Activated CD4-positive, alpha-beta memory T cell treated with anti-CD3 and anti-CD28 coated beads for 36 hours (primary cell): ENCODE measurements at regions of chr22 and their contacts with region 1.

Region 1: DNA sequence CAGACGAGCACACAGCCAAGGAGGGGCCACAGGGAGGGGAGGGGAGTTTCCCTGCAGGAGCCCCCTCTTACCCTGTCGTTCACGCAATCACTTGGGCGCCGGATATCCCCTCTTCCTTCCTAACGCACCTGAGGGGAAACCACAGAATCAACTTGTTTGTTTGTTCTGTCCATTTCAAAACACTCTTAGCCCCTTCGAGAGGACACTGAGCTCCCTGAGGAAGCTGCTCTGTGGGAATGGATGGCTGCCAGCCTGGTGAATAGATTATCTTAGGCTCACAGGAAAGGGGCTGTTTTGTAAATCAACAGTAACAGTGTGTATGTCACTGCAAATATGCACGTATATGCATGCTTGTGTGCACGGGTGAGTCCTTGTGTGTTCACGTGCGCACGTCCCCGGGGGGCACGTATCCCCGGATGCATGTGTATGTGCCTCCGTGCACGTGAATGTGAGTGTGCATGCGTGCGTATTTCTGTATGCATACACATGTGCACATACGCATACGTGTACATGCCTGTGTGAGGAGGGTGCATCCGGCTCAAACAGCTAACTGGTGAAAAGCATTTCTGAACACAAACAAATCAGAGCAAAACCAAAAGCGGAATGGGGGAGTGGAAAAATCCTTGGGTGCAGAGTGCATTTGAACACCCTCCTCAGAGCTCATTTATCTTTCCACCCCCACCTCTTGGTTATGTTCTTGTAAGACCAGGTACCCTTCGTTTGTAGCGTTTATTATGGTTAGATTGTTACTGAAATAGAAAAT is 7.2 kb downstream of the ARSA start:
- DNase-seq: peak; percentile 85
- H3K4me3 Mint-ChIP-seq: peak overlapping the region; percentile 75
- H3K27ac Mint-ChIP-seq: peak overlapping the region; percentile 97
- H3K4me1 Mint-ChIP-seq: peaks cover 37% of the 10 kb centered on the region
- H3K27me3 Mint-ChIP-seq: no peaks in the 10 kb centered on the region

Region 2: GRCh38 chr22:50244420-50245213 is 376.2 kb before region 1 on chr22 and contains the start of gene TUBGCP6:
- CTCF ChIA-PET with region 1: interaction called, 13 read pairs
- POLR2A ChIA-PET with region 1: interaction called, 4 read pairs
- intact Hi-C with region 1: loop called (anchors 2 kb)
- DNase-seq: peak; percentile 95
- H3K4me3 Mint-ChIP-seq: peak within 1 kb of the TSS; percentile 91
- H3K27ac Mint-ChIP-seq: peak within 1 kb of the TSS; percentile 90
- H3K4me1 Mint-ChIP-seq: peaks cover 41% of the 10 kb centered on the region
- H3K27me3 Mint-ChIP-seq: no peaks in the 10 kb centered on the region
- total RNA-seq, gene TUBGCP6: 41.4 to 43.8 TPM

Region 3: DNA sequence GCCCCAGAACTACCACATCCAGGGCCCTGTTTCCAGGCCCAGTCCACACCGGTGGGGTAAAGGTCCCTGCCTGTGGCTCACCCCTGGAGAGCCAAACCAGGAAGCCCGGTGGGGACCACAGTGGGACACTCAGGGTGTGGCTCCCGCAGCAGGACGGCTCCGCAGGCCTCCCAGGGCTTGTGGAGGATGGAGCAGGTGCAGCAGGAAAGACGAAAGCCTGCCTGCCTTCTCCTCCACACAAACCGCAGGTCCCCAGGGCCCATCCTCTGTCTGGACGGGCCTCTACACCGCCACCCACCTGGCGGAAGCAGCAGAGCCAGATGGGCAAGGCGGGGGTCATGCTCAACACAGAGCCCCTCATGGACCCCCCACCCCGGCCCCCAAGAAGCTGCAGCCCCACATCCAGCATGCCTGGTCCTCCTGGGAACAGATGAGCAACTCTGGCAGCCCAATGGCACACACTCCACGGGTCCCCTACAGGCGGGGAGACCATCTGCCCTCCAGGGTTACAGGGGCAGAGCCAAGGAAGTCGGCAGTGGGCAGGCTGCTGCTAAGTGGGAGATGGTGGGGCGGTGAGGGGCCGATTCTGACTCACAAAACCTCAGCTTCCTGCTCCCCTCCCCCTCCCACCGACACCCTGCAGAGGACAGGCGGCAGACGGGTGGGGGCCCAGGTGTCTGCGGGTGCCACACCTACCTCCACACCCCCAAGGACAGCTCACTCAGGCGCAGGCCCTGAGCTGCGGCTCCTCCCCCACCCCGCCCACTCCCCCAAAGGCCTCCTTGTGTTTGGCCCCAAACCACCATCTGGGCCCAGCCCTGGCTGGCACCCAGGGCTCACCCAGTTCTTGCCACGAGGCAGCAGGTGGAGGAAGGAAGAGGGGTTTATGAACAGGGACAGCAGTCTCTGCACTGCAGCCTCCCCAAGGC is 151.1 kb before region 1 on chr22:
- CTCF ChIA-PET with region 1: interaction called, 9 read pairs
- POLR2A ChIA-PET with region 1: interaction called, 6 read pairs
- intact Hi-C with region 1: loop called (anchors 2 kb)
- DNase-seq: peak; percentile 97
- H3K4me3 Mint-ChIP-seq: peak overlapping the region; percentile 53
- H3K27ac Mint-ChIP-seq: peak overlapping the region; percentile 92
- H3K4me1 Mint-ChIP-seq: peaks cover 55% of the 10 kb centered on the region
- H3K27me3 Mint-ChIP-seq: no peaks in the 10 kb centered on the region

Region 4: DNA sequence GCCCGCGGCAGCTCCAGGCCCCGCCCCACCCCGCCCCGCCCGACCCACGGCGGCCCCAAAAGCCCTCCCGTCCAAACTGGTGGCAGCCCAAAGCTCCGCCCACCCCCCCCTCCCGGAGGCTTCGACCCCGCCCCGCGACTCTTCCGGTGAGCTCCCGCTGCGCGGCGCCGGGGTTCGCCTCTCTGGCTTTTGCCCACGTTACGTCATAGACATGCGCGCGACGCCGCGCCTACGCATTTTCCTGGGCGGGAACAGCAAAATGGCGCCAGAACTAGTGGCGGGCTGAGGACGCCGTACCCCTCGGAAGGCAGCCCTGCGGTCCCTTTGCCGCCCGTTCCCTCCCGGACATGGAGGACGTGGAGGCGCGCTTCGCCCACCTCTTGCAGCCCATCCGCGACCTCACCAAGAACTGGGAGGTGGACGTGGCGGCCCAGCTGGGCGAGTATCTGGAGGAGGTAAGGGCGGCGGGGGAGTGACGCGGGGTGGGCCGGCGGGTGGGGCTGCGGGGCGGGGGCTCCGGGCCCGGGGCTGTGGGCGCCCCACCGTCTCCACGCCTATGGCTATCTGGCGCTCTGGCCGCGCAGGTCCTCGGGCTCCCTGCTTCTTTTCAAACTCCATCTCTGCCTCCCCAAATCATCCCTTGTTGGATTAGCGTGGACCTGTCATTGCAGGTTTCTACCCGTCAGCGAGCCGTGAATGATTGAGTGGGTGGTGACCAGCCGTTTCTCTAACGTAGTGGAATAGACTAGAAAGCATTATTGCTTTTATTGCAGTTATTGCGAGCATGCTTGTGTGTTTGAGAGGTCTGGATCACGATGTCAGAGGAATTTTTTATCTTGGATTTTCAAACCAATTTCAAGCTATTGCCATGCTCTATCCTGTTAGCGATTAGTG is 112.5 kb before region 1 on chr22 and contains the start of gene NCAPH2:
- CTCF ChIA-PET with region 1: interaction called, 25 read pairs
- POLR2A ChIA-PET with region 1: interaction called, 7 read pairs
- intact Hi-C with region 1: loop called (anchors 1 kb)
- DNase-seq: peak; percentile 99
- H3K4me3 Mint-ChIP-seq: peak within 1 kb of the TSS; percentile 97
- H3K27ac Mint-ChIP-seq: peak within 1 kb of the TSS; percentile 97
- H3K4me1 Mint-ChIP-seq: peaks cover 20% of the 10 kb centered on the region
- H3K27me3 Mint-ChIP-seq: no peaks in the 10 kb centered on the region
- total RNA-seq, gene NCAPH2: 134 to 138 TPM

Region 5: GRCh38 chr22:50537765-50538164 is 83.0 kb before region 1 on chr22:
- CTCF ChIA-PET with region 1: interaction called, 22 read pairs
- POLR2A ChIA-PET with region 1: interaction called, 39 read pairs
- intact Hi-C with region 1: loop called (anchors 1 kb)
- DNase-seq: no peak
- H3K4me3 Mint-ChIP-seq: no peak overlapping the region
- H3K27ac Mint-ChIP-seq: peak overlapping the region; percentile 100
- H3K4me1 Mint-ChIP-seq: peaks cover 81% of the 10 kb centered on the region
- H3K27me3 Mint-ChIP-seq: no peaks in the 10 kb centered on the region

Region 6: GRCh38 chr22:50582562-50583293 is 38.0 kb before region 1 on chr22 and contains the start of gene CHKB:
- CTCF ChIA-PET with region 1: interaction called, 15 read pairs
- POLR2A ChIA-PET with region 1: interaction called, 6 read pairs
- intact Hi-C with region 1: loop called (anchors 1 kb)
- DNase-seq: peak; percentile 99
- H3K4me3 Mint-ChIP-seq: peak within 1 kb of the TSS; percentile 94
- H3K27ac Mint-ChIP-seq: peak within 1 kb of the TSS; percentile 87
- H3K4me1 Mint-ChIP-seq: peaks cover 21% of the 10 kb centered on the region
- H3K27me3 Mint-ChIP-seq: no peaks in the 10 kb centered on the region
- total RNA-seq, gene CHKB: 76.2 to 76.3 TPM

Region 7: DNA sequence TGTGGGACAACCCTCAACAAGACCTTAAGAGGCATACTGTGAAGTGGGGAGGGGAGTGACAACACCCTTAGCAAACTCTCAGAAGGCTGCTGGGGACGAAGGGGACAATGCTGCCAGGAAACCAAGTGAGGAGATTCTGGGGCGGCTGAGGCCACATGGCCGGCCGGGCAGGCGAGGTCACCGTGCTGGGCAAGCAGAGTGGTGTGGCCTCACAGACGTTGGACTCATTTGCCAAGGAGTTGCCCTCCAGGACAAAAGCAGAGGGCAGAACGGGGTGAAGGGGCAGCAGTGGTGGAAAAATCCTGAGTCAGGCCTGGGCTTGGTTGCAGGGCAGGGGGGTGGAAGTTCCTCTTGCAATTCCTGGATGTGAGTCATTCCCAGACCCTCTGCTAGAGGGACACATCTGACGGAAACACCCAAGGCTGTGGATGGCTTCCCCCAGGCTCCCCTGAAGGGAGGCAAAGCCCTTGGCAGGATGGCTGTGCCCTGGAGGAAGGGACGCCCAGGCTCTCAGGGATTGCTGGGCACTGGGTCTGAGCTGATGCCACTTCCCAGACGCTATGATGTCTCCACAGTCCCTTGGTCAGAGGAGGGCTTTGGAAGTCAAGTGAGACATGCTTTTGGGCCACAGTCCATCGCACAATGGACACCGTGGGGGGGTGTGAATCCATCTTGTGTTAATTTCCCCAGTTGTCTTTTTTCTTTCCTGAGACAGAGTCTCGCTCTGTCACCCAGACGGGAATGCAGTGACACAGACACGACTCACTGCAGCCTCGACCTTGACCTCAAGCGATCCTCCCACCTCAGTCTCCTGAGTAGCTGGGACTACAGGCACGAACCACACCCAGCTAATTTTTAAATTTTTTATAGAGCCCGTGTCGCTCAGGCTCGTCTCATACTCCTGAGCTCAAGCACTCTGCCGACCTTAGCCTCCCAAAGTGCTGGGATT is 35.6 kb after region 1 on chr22:
- CTCF ChIA-PET with region 1: no interaction called
- POLR2A ChIA-PET with region 1: no interaction called
- intact Hi-C with region 1: no loop called
- DNase-seq: no peak
- H3K4me3 Mint-ChIP-seq: no peak overlapping the region
- H3K27ac Mint-ChIP-seq: no peak overlapping the region
- H3K4me1 Mint-ChIP-seq: no peaks in the 10 kb centered on the region
- H3K27me3 Mint-ChIP-seq: peaks cover 24% of the 10 kb centered on the region